Ovary (tissue), 10 donors: ENCODE measurements at regions of chrX and their contacts with region 1.

Region 1: GRCh38 chrX:131812836-131813825 is 210.0 kb upstream of the STK26 start:
- DNase-seq: peak; percentile 75 to 82 (median 81)
- H3K4me3 ChIP-seq: peak overlapping the region; percentile 23
- H3K27ac ChIP-seq: peak overlapping the region in 1 of 2 donors; percentile 78
- H3K4me1 ChIP-seq: no peaks in the 10 kb centered on the region
- H3K27me3 ChIP-seq: no peaks in the 10 kb centered on the region
- CTCF ChIP-seq: peak; percentile 35 to 41 (median 39)
- EP300 ChIP-seq: no peak
- POLR2A ChIP-seq: no peak

Region 2: GRCh38 chrX:131394384-131394783 is 418.7 kb before region 1 on chrX:
- intact Hi-C with region 1: no loop called
- DNase-seq: no peak
- H3K4me3 ChIP-seq: no peak overlapping the region
- H3K27ac ChIP-seq: no peak overlapping the region
- H3K4me1 ChIP-seq: no peaks in the 10 kb centered on the region
- H3K27me3 ChIP-seq: no peaks in the 10 kb centered on the region
- CTCF ChIP-seq: no peak
- EP300 ChIP-seq: no peak
- POLR2A ChIP-seq: no peak

Region 3: GRCh38 chrX:131704136-131704695 is 108.9 kb before region 1 on chrX:
- intact Hi-C with region 1: loop called in 1 of 4 experiments (anchors 10 kb)
- DNase-seq: peak; percentile 92 to 97 (median 93)
- H3K4me3 ChIP-seq: peak overlapping the region; percentile 36
- H3K27ac ChIP-seq: peak overlapping the region; percentile 55 to 82
- H3K4me1 ChIP-seq: no peaks in the 10 kb centered on the region
- H3K27me3 ChIP-seq: no peaks in the 10 kb centered on the region
- CTCF ChIP-seq: peak; percentile 56 to 74 (median 70)
- EP300 ChIP-seq: no peak
- POLR2A ChIP-seq: no peak

Region 4: GRCh38 chrX:131802835-131803626 is 10.1 kb before region 1 on chrX:
- intact Hi-C with region 1: loop called in 1 of 4 experiments (anchors 1 kb)
- DNase-seq: peak; percentile 78 to 86 (median 83)
- H3K4me3 ChIP-seq: no peak overlapping the region
- H3K27ac ChIP-seq: peak overlapping the region in 1 of 2 donors; percentile 8
- H3K4me1 ChIP-seq: no peaks in the 10 kb centered on the region
- H3K27me3 ChIP-seq: no peaks in the 10 kb centered on the region
- CTCF ChIP-seq: peak; percentile 53 to 75 (median 68)
- EP300 ChIP-seq: no peak
- POLR2A ChIP-seq: no peak

Region 5: DNA sequence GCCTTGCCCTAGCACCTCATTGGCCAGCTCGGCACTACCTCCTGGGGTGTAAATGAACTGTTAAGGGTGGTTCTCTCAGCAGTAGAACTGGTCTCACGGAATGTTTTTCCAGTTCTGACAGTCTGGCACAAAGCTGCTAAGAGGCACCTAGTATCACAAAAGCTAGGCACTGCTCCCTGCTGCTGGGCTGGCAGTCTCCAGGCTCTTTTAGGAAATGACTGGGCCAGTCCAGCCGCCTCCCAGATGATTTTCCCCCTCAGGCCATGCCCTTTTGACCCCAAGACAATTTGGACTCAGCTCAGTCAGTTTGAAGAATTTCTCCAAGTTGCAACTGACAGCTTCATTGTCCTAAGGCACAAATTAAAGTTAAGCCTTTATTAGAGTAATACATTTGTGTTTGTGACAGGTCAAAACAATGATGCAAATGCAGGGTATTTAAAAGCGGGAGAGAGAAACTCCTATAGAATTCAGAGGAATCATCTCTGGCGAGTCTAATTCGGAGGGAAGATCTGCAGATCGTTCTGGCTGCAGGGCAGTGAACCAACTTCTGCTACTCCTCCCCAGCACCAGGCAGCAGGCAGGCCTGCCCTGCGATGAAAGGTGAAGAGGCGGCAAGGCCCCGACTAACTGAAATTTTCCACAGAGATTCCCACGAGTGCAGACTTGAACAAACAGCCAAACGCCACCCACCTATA is 306.8 kb after region 1 on chrX:
- intact Hi-C with region 1: no loop called
- DNase-seq: no peak
- H3K4me3 ChIP-seq: no peak overlapping the region
- H3K27ac ChIP-seq: no peak overlapping the region
- H3K4me1 ChIP-seq: no peaks in the 10 kb centered on the region
- H3K27me3 ChIP-seq: no peaks in the 10 kb centered on the region
- CTCF ChIP-seq: no peak
- EP300 ChIP-seq: no peak
- POLR2A ChIP-seq: no peak